ENCODE measurements at regions of chr13 and their contacts with region 1.

Region 1: GRCh38 chr13:42215578-42216421 is 56.2 kb upstream of the AKAP11 start:
- DNase-seq: no peak
- ATAC-seq: no peak

Region 2: DNA sequence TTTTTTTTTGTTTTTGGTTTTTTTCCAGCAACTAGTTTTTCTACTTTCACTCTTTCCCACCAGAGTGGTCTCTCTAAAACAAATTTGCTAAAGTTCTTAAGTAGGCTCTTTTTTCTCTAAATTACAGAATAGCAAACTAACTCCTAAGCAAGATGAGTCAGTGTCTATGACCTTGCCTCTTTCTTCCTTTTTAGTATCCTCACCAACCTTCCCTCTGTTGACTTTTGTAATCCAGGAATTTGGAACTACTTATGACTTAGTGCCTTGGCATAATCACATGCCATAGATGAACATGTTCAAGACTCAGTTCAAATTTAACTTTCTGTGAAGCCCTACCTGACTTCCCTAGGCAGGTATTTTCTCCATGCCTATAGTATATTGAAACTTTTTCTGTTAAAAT is 23.8 kb after region 1 on chr13:
- intact Hi-C with region 1: loop called (anchors 2 kb)
- DNase-seq: no peak
- ATAC-seq: no peak